Cardiac septum (tissue), 1 donor: ENCODE measurements at regions of chr15 and their contacts with region 1.

Region 1: GRCh38 chr15:49468440-49468839 is 45.4 kb downstream of the FGF7 start:
- DNase-seq: no peak

Region 2: DNA sequence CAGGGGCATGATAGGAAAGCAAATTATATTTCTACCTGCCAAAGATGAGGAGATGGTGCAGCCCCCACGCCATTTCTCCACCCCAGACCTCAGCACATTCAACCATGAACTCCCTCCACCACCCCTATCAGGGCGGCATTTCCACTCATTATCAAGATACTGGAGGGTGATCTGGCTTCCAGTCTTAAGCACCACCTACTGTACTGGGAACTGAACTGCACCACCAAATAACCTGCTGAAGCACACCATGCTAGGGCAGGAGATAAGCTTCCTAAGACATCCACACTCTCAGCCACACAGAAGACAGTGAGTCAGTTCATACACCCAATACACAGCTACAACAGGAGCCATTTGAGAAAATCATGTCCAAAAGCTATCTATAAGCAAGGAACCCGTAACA is 53.4 kb after region 1 on chr15:
- intact Hi-C with region 1: loop called (anchors 10 kb)
- DNase-seq: no peak

Region 3: GRCh38 chr15:50044904-50045303 is 576.5 kb after region 1 on chr15:
- intact Hi-C with region 1: no loop called
- DNase-seq: no peak